WTC11 (cell line): ENCODE measurements at regions of chr16 and their contacts with region 1.

Region 1: DNA sequence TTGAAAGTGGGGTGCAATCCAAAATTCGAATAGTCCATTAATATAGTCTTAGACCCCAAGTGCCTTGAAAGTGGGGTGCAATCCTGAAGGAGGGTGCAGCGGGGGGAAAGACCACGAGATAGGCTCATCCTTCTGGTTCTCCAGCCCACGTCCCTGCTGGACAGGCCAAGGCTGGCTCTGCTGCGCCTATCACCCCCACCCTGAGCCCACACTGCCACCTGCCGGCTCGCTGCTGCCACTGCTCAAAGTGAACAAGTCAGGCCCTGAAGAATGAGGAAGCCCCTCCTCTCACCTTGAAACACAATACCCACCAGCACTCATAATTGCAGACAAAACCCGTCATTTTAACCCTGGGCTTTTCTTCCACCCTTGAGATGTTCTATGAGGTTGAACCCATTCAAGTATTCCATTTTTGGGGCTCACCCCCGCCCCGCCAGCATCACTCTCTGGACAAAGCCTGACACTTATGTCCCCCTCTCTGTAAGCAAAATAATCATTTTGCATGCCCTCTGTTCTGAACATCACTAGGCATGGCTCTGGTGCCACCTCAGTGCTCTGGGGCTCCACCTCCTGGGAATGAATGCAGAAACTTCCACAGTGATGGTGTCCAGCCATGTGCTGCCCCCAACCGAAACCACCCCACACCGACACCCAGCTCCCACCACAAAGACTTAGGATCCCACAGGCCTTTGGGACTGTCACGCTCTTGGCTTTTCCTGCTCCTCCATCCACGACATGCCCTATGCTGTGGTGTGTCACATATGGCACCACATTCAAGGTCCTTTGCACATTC is 56.8 kb downstream of the BEAN1 start:
- DNase-seq: peak; percentile 91
- ATAC-seq: peak; percentile 91
- H3K4me3 Mint-ChIP-seq: no peak overlapping the region
- H3K27ac Mint-ChIP-seq: no peak overlapping the region
- H3K4me1 Mint-ChIP-seq: peaks cover 9% of the 10 kb centered on the region
- H3K27me3 Mint-ChIP-seq: peaks cover 2% of the 10 kb centered on the region
- CTCF ChIP-seq: peak; percentile 80

Region 2: DNA sequence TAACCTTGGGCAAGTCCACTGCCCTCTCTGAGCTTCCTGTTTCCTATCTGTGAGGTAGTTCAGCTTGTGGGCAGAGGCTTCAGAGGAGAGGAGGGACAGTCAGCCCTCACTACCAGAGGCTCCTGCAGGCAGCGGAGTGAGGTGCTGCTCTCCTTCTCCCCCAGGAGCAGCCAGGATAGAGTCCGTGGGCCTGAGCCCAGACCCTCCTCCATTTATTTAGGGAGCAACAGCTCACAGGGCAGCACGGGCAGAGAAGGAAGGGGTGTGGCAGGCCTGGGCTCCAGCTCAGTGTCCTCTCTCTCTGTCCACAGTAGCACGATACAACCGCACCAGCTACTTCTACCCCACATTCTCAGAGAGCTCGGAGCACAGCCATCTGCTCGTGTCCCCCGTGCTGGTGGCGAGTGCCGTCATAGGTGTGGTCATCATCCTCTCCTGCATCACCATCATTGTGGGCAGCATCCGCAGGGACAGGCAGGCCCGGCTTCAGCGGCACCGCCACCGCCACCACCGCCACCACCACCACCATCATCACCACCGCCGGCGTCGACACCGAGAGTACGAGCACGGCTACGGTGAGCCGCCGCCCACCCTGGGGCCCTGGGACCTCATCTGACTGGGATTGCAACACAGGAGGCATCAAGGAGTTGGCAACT is 14.5 kb before region 1 on chr16:
- CTCF ChIA-PET with region 1: interaction called, 10 read pairs
- POLR2A ChIA-PET with region 1: no interaction called
- DNase-seq: no peak
- ATAC-seq: no peak
- H3K4me3 Mint-ChIP-seq: no peak overlapping the region
- H3K27ac Mint-ChIP-seq: no peak overlapping the region
- H3K4me1 Mint-ChIP-seq: peaks cover 6% of the 10 kb centered on the region
- H3K27me3 Mint-ChIP-seq: no peaks in the 10 kb centered on the region
- CTCF ChIP-seq: no peak

Region 3: DNA sequence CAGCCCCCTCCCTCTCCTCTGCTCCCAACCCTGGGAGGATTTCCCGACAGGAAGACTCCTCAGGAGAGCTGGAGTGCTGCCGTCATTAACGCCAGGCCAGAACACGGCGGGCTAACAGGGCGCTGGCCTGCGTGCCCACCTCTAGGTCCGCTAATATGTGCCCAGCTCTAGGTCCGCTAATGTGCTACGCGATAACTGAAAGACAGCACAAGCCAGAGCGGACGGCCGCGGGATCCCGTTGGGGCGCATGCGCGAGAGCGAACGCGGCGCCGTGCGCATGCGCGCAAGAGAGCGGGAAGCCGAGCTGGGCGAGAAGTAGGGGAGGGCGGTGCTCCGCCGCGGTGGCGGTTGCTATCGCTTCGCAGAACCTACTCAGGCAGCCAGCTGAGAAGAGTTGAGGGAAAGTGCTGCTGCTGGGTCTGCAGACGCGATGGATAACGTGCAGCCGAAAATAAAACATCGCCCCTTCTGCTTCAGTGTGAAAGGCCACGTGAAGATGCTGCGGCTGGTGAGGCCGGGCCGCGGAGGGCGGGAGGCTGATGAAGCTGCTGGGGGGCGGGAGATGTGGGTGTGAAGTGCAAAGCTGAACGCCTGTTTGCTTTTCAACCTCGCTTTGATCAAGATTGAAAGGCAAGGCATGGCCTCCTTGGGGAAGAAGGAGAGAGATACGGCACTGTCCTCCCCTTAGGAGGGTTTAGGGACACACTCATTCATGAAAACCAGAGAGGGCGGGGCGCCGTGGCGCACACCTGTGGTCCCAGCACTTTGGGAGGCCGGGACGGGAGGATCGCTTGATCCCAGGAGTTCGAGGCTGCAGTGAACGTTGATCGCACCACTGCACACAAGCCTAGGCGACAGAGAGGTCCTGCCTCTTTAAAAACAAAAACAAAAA is 68.6 kb after region 1 on chr16 and contains the start of gene CKLF:
- CTCF ChIA-PET with region 1: no interaction called
- POLR2A ChIA-PET with region 1: no interaction called
- DNase-seq: peak; percentile 85
- ATAC-seq: peak; percentile 47
- H3K4me3 Mint-ChIP-seq: peak within 1 kb of the TSS; percentile 68
- H3K27ac Mint-ChIP-seq: no peak within 1 kb of the TSS
- H3K4me1 Mint-ChIP-seq: peaks cover 35% of the 10 kb centered on the region
- H3K27me3 Mint-ChIP-seq: peaks cover 36% of the 10 kb centered on the region
- CTCF ChIP-seq: no peak
- total RNA-seq, gene CKLF: 21.0 to 23.9 TPM (median 23.8 TPM) in 3 replicates